RWPE1 (cell line): ENCODE measurements at regions of chr20 and their contacts with region 1.

Region 1: GRCh38 chr20:46057856-46058598 is 29.0 kb downstream of the SLC12A5 start:
- DNase-seq: peak; percentile 32
- H3K27ac ChIP-seq: no peak overlapping the region
- CTCF ChIP-seq: peak; percentile 22; the same call in 1 of the 2 replicates

Region 2: DNA sequence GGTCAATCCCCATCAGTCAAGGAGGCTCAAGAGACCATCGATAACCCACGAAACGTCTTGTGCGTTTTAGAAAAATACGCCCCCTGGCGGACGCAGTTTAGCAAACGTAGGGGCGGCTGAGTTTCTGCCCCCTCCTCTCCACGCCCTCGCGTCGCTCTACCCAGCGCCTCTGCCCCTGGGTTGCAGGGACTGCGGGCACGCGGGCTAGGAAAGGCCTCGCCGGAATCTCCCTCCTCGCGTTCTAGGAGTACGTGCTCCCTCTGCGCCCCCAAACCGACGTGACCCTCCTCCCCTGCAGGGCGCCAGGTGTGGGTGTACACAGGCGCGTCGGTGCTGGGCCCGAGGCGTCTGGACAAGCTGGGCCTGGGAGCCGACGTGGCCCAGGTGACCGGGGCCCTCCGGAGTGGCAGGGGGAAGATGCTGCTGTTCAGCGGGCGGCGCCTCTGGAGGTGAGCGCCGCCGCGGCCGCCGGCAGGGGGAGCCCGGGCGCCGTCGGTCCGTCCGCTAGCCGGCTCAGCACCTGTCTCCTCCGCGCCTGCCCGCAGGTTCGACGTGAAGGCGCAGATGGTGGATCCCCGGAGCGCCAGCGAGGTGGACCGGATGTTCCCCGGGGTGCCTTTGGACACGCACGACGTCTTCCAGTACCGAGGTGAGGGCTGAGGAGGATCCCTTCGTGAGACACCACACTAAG is 44.1 kb before region 1 on chr20:
- CTCF ChIA-PET with region 1: interaction called, 12 read pairs
- POLR2A ChIA-PET with region 1: no interaction called
- DNase-seq: peak; percentile 83
- H3K27ac ChIP-seq: no peak overlapping the region
- CTCF ChIP-seq: peak; percentile 100

Region 3: DNA sequence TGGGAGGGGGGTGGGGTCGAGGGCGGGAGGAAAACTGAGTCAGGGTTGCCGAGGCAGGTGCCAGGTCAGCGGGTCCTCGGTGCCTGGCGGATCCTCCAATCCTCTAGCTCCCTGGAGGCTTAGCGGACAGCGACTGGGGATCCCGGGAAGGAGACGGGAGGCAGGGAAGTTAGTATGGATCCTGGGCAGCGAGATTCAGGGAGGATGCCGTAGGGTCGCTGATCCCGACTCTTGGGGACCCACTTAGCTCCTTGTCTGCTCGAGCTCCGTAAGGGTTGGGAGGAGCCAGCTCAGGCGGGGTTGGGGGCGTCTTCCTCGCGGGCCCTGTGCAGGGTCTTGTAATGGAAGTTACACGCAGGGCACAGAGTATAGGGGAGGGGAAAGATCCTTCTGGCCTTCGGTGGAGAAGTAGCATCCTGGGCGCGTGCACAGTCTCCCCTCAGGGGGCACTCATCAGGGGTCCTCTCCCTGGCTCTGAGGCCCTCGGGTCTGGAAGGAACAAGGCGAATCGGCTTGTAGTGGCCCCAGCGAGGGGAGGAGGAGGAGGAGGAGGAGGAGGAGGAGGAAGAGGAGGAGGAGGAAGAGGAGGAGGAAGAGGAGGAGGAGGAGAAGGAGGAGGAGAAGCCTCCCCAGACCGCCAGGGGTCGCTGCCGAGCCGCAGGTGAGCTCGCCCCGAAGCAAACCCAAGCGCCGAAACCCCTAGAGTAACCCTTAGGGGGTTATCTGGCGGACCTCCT is 35.4 kb before region 1 on chr20:
- CTCF ChIA-PET with region 1: interaction called, 15 read pairs
- POLR2A ChIA-PET with region 1: no interaction called
- DNase-seq: peak; percentile 65
- H3K27ac ChIP-seq: peak overlapping the region; percentile 59
- CTCF ChIP-seq: peak; percentile 88